SK-N-SH (cell line): ENCODE measurements at regions of chr17 and their contacts with region 1.

Region 1: DNA sequence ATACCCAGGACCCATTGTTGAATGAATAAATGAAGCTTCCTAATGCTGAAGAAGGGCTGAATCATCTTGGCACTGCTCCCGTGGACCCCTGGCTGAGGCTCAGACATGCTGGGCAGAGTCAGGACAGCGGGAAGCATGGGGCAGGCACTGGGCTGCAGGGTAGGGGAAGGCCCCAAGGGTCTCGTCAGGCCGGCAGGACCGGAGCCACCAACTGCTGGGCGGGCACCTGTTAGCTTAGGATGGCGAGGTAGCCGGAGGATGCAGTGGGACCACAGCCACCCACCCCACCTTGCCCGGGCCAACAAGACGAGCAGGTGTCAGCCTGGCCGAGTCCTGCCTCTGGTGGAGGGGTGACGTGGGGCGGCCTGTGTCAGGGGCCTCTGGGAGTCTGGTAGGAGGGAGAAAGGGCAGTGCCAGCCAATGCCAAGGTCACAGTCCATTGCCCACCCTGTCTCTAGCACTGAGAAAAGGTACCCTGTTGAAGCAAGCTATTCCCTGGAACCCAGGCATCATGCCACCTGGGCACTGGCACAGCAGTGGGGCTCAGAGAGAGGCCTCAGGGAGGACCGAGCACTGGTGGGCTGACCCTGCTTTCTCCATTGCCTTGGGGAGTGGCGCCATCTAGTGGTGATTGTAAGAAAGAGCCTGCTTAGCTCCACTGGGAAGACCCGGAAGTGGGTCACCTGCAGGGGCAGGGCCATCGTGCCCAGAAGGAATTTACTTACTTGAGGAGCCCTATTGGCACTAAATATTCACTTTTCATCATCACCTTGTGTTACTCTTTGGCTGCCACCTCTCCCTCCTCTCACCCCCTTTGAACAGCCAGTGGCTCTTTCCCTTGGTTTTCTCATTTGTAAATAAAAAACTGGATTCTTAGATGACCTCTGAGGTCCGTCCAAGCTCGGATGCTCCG is 3.0 kb upstream of the DLX3 start:
- DNase-seq: peak; percentile 92
- H3K4me3 ChIP-seq: peak overlapping the region in 1 of 2 experiments; percentile 3; a peak in 2 of 4 replicates
- H3K27ac ChIP-seq: no peak overlapping the region
- H3K4me1 ChIP-seq: peaks cover 6 to 12% of the 10 kb centered on the region in 2 experiments; a peak in 1 of 4 replicates
- H3K27me3 ChIP-seq: peaks cover 76% of the 10 kb centered on the region
- CTCF ChIP-seq: peak; percentile 99
- EP300 ChIP-seq: no peak
- RAD21 ChIP-seq: peak; percentile 99

Region 2: DNA sequence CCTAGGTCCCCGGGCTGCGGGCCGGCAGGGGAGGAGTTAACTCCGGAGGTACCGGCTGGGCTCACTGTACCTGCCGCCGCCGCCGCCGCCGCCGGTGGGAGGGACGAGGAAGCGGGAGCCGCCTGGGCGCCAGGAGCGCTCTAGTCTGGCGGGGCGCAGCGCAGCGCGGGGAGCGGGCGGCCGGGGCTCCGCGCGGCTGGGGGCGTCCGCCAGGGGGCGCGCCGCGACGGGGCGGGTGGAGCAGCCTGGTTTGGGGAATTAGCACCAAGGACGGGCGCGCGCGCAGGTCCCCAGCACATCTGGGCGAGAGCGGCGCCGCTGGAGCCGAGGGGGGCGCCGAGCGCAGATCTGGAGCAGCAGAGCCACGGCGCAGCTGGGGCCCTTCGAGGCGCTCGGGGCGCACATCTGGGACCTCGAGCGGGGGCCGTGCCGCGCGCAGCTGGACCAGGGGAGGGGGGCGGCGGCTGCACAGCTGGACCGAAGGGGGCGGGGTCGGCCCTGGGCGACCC is 422.4 kb before region 1 on chr17 and contains the start of gene NXPH3:
- CTCF ChIA-PET with region 1: interaction called, 42 read pairs
- POLR2A ChIA-PET with region 1: no interaction called
- DNase-seq: peak; percentile 91
- H3K4me3 ChIP-seq: peak within 1 kb of the TSS; percentile 67 to 83
- H3K27ac ChIP-seq: no peak within 1 kb of the TSS
- H3K4me1 ChIP-seq: peaks cover 3 to 15% of the 10 kb centered on the region in 2 experiments; a peak in 2 of 4 replicates
- H3K27me3 ChIP-seq: peaks cover 15% of the 10 kb centered on the region; the same call in 1 of the 2 replicates
- CTCF ChIP-seq: peak; percentile 47
- EP300 ChIP-seq: no peak
- RAD21 ChIP-seq: peak; percentile 28; the same call in 1 of the 2 replicates
- polyA plus RNA-seq, gene NXPH3: 0.30 and 0.31 TPM in 2 replicates

Region 3: DNA sequence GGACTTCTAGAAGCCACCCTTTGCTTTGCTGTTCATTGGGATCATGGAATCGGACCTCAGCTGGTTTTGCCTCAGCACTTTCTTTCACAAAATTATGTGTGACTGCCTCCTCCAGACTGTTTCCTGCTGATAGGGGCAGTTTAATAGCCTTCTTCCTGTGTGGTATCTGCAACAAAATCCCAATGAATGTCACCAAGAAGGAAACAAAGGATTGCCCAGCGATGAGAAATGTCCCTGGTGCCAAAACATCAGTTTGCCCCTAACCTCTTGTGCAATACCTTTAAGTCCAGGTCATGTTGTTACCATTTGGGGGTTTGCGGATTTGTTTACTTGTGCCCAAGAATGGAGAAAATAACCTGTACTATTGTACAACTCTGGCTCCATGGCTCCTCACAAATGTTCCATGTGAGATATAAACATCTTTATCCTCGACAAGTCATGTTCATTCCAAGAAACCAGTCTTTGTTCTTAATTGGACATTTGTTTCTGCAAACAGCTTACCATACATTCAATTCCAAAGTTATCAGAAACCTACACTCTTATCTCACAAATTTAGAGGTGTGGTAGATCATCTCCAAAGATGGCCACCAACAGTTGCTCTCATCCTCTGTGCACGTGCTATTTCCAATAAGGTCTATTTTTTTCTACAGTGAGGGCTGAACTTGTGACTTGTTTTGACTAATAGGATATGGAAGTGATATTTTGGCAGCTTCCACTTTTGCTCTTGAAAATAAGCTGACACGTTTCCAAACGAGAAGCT is 165.0 kb before region 1 on chr17:
- CTCF ChIA-PET with region 1: interaction called, 26 read pairs
- POLR2A ChIA-PET with region 1: no interaction called
- DNase-seq: no peak
- H3K4me3 ChIP-seq: no peak overlapping the region
- H3K27ac ChIP-seq: no peak overlapping the region
- H3K4me1 ChIP-seq: peaks cover 0 to 16% of the 10 kb centered on the region in 2 experiments; a peak in 1 of 4 replicates
- H3K27me3 ChIP-seq: no peaks in the 10 kb centered on the region
- CTCF ChIP-seq: no peak
- EP300 ChIP-seq: no peak
- RAD21 ChIP-seq: no peak

Region 4: DNA sequence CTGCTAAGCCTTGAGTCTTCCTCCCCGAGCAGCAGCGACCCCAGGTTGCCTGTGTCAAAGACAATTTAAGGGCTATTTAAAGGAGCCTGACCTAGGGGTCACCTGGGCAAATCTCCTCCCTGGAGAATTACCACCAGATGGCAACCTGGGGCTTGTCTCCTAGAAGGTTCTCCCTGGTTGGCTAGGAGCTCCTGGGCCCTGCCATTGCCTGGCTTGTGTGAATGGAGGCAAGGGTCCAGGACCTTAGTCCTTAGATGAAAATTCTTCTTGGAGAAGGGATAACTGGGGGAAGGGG is 98.9 kb before region 1 on chr17:
- CTCF ChIA-PET with region 1: interaction called, 170 read pairs
- POLR2A ChIA-PET with region 1: no interaction called
- DNase-seq: no peak
- H3K4me3 ChIP-seq: no peak overlapping the region
- H3K27ac ChIP-seq: no peak overlapping the region
- H3K4me1 ChIP-seq: no peaks in the 10 kb centered on the region; a peak in 1 of 4 replicates
- H3K27me3 ChIP-seq: peaks cover 98% of the 10 kb centered on the region
- CTCF ChIP-seq: peak; percentile 35
- EP300 ChIP-seq: no peak
- RAD21 ChIP-seq: no peak; the same call in 1 of the 2 replicates

Region 5: DNA sequence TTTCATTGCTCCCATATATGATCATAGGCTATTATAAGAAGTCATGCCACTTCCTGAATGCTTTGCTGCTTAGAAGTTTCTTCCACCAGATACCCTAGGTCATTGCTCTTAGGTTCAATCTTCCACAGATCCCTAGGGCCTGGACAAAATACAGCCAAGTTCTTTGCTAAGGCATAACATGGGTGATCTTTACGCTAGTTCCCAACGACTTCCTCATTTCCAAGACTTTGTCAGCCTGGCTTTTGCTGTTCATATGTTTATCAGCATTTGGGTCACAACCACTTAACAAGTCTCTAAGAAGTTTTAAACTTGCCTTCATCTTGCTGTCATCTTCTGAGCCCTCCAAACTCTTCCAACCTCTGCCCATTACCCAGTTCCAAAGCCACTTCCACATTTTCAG is 17.1 kb after region 1 on chr17:
- CTCF ChIA-PET with region 1: interaction called, 38 read pairs
- POLR2A ChIA-PET with region 1: no interaction called
- DNase-seq: no peak
- H3K4me3 ChIP-seq: no peak overlapping the region
- H3K27ac ChIP-seq: no peak overlapping the region
- H3K4me1 ChIP-seq: no peaks in the 10 kb centered on the region
- H3K27me3 ChIP-seq: no peaks in the 10 kb centered on the region
- CTCF ChIP-seq: no peak
- EP300 ChIP-seq: no peak
- RAD21 ChIP-seq: no peak

Region 6: GRCh38 chr17:50064258-50065001 is 66.4 kb after region 1 on chr17:
- CTCF ChIA-PET with region 1: interaction called, 61 read pairs
- POLR2A ChIA-PET with region 1: no interaction called
- DNase-seq: peak; percentile 64
- H3K4me3 ChIP-seq: no peak overlapping the region
- H3K27ac ChIP-seq: peak overlapping the region; percentile 77 to 100
- H3K4me1 ChIP-seq: peaks cover 44 to 64% of the 10 kb centered on the region in 2 experiments
- H3K27me3 ChIP-seq: no peaks in the 10 kb centered on the region
- CTCF ChIP-seq: no peak
- EP300 ChIP-seq: peak in 1 of 2 experiments; percentile 89; a peak in 2 of 4 replicates
- RAD21 ChIP-seq: no peak

Region 7: GRCh38 chr17:50122945-50123344 is 124.9 kb after region 1 on chr17:
- CTCF ChIA-PET with region 1: no interaction called
- POLR2A ChIA-PET with region 1: no interaction called
- DNase-seq: no peak
- H3K4me3 ChIP-seq: no peak overlapping the region
- H3K27ac ChIP-seq: no peak overlapping the region
- H3K4me1 ChIP-seq: peaks cover 0 to 4% of the 10 kb centered on the region in 2 experiments; a peak in 1 of 4 replicates
- H3K27me3 ChIP-seq: no peaks in the 10 kb centered on the region
- CTCF ChIP-seq: no peak
- EP300 ChIP-seq: no peak
- RAD21 ChIP-seq: no peak